ENCODE measurements at regions of chr7 and their contacts with region 1.

Region 1: GRCh38 chr7:142632291-142633134 is 116.8 kb upstream of the PRSS1 start:
- DNase-seq: peak; percentile 22 to 83 (median 44)
- ATAC-seq: peak; percentile 42
- H3K4me3 ChIP-seq: no peak overlapping the region
- H3K4me3 Mint-ChIP-seq: no peak overlapping the region
- H3K27ac ChIP-seq: no peak overlapping the region
- H3K27ac Mint-ChIP-seq: peak overlapping the region; percentile 54
- H3K4me1 ChIP-seq: peaks cover 8% of the 10 kb centered on the region
- H3K4me1 Mint-ChIP-seq: peaks cover 15% of the 10 kb centered on the region
- H3K27me3 ChIP-seq: no peaks in the 10 kb centered on the region
- H3K27me3 Mint-ChIP-seq: no peaks in the 10 kb centered on the region
- CTCF ChIP-seq: peak; percentile 58

Region 2: GRCh38 chr7:142646386-142647140 is 14.1 kb after region 1 on chr7:
- CTCF ChIA-PET with region 1: no interaction called
- POLR2A ChIA-PET with region 1: interaction called, 13 read pairs
- intact Hi-C with region 1: no loop called
- DNase-seq: no peak
- ATAC-seq: peak; percentile 66
- H3K4me3 ChIP-seq: peak overlapping the region; percentile 35
- H3K4me3 Mint-ChIP-seq: peak overlapping the region; percentile 82
- H3K27ac ChIP-seq: no peak overlapping the region
- H3K27ac Mint-ChIP-seq: peak overlapping the region; percentile 86
- H3K4me1 ChIP-seq: no peaks in the 10 kb centered on the region
- H3K4me1 Mint-ChIP-seq: peaks cover 24% of the 10 kb centered on the region
- H3K27me3 ChIP-seq: no peaks in the 10 kb centered on the region
- H3K27me3 Mint-ChIP-seq: peaks cover 28% of the 10 kb centered on the region
- CTCF ChIP-seq: no peak

Region 3: DNA sequence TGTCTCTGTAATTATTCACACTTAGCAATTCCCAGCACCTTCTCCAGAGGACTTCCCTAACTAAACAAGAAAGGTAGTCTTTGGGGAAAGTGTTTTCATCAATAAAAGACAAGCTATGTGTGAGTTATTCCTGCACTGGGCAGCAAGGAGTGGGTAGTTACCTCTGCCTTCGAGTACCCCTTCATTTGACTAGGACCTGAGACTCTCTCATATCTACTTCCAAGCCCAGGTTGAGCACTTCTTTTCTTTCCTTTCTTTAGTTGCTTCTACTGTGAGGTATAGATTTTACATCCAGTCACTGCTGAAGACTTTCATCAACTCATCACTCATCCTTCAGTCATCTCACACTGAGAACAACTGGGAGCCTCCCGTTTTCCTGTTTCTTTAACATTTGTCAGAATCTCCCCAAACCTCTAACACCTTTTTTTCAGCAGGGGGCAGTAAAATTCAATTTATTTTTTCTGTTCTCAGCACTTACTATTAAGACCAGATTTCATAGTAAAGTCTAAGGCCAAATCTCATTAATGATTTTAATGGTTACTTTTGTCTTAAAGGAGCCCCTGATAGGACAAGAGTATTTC is 36.7 kb after region 1 on chr7:
- CTCF ChIA-PET with region 1: no interaction called
- POLR2A ChIA-PET with region 1: interaction called, 3 read pairs
- intact Hi-C with region 1: loop called (anchors 2 to 5 kb)
- DNase-seq: peak in 3 of 14 experiments; percentile 40 to 52 (median 51)
- ATAC-seq: no peak
- H3K4me3 ChIP-seq: no peak overlapping the region
- H3K4me3 Mint-ChIP-seq: no peak overlapping the region
- H3K27ac ChIP-seq: no peak overlapping the region
- H3K27ac Mint-ChIP-seq: peak overlapping the region; percentile 84
- H3K4me1 ChIP-seq: peaks cover 9% of the 10 kb centered on the region
- H3K4me1 Mint-ChIP-seq: peaks cover 35% of the 10 kb centered on the region
- H3K27me3 ChIP-seq: no peaks in the 10 kb centered on the region
- H3K27me3 Mint-ChIP-seq: no peaks in the 10 kb centered on the region
- CTCF ChIP-seq: peak; percentile 43

Region 4: DNA sequence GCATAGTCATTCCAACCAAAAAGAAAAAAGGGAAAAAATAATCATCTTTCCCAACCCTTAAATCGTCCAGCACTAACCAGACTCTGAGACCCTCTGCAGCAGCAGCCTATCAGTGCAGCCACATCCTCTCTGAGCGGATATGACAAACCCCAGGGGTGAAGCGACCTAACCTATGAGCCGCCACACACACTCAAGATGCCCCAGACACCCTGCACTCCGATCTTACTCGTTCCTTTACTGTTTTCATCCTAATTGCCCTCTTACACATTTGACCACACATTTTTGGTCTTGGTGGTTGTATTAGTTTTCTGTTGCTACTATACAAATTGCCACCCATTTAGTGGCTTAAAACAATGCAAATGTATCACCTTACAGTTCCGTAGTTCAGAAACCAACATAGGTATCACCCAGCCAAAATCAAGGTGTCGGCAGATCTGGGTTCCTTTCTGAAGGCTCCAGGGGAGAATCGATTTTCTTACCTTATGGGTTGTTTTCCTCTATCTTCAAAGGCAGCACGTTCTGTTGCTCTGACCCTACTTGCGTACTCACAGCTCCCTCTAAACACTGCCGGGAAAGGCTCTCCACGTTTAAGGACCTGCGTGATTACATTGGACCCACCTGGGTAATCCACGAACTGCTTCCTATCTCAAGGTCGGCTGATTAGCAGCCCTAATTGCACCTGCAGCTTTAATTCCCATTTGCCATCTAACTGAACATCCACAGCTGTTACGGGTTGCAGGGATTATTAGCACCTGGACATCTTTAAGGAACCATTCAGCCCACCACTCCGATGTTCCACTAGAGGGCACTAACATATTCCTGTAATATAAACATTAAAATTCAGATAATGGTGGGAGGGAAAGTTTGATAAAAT is 79.5 kb after region 1 on chr7:
- CTCF ChIA-PET with region 1: no interaction called
- POLR2A ChIA-PET with region 1: interaction called, 18 read pairs
- intact Hi-C with region 1: loop called in 1 of 2 experiments (anchors 5 kb)
- DNase-seq: peak in 8 of 14 experiments; percentile 9 to 66 (median 36)
- ATAC-seq: peak; percentile 56
- H3K4me3 ChIP-seq: peak overlapping the region; percentile 51
- H3K4me3 Mint-ChIP-seq: peak overlapping the region; percentile 84
- H3K27ac ChIP-seq: peak overlapping the region; percentile 40 to 53
- H3K27ac Mint-ChIP-seq: peak overlapping the region; percentile 80
- H3K4me1 ChIP-seq: peaks cover 44% of the 10 kb centered on the region
- H3K4me1 Mint-ChIP-seq: peaks cover 71% of the 10 kb centered on the region
- H3K27me3 ChIP-seq: no peaks in the 10 kb centered on the region
- H3K27me3 Mint-ChIP-seq: no peaks in the 10 kb centered on the region
- CTCF ChIP-seq: peak; percentile 52

Region 5: DNA sequence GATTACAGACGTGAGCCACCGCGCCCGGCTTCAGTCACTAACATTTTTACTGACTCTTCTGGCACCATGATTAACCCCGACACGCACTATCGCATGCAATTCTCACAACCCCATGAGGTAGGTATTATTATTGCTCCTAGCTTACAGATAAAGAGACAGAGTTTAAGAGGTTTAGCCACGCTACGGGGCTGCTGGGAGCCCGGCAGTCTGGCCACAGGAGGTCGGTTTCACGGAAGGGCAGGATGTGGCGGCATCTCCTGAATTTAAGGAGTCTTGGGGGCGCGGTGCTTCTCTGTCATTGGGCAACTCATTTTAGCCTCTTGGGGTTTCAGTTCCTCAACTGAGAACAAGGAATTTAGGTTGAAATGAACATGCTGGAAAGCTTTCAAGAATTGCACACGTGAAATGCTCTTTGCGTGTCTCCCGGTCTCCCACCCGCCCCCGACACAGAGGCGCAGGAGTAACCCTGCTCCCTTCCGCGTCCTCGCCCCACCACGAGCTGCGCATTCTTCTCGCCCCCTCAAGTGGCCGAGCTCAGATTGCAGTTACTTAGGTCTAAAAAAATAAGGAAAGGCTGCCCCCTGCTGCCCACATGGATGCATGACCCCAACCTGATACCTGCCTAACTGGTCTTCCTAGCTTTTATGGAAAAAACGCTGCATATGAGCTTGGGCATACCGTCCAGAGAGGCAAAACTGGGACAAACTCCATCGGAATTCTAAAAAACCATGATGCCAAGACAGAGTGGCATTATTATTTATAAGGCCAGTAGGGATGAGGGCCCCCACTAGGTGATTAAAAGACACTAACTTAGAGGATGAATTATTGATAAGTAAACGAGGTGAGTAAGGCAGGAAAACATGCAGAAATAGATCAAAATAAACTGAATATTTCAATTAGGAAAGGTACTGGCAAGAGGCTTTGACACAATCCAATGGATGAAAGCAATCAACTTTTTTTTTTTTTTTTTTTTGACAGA is 150.7 kb after region 1 on chr7:
- CTCF ChIA-PET with region 1: interaction called, 17 read pairs
- POLR2A ChIA-PET with region 1: interaction called, 53 read pairs
- intact Hi-C with region 1: loop called (anchors 1 to 2 kb)
- DNase-seq: peak; percentile 62 to 90 (median 74)
- ATAC-seq: peak; percentile 43
- H3K4me3 ChIP-seq: peak overlapping the region; percentile 54
- H3K4me3 Mint-ChIP-seq: peak overlapping the region; percentile 91
- H3K27ac ChIP-seq: no peak overlapping the region
- H3K27ac Mint-ChIP-seq: peak overlapping the region; percentile 98
- H3K4me1 ChIP-seq: peaks cover 13% of the 10 kb centered on the region
- H3K4me1 Mint-ChIP-seq: peaks cover 22% of the 10 kb centered on the region
- H3K27me3 ChIP-seq: no peaks in the 10 kb centered on the region
- H3K27me3 Mint-ChIP-seq: no peaks in the 10 kb centered on the region
- CTCF ChIP-seq: peak; percentile 74

Region 6: GRCh38 chr7:142788303-142789289 is 156.1 kb after region 1 on chr7:
- CTCF ChIA-PET with region 1: interaction called, 17 read pairs
- POLR2A ChIA-PET with region 1: interaction called, 53 read pairs
- intact Hi-C with region 1: loop called (anchors 1 to 2 kb)
- DNase-seq: peak in 5 of 14 experiments; percentile 13 to 45 (median 25)
- ATAC-seq: no peak
- H3K4me3 ChIP-seq: peak overlapping the region; percentile 91
- H3K4me3 Mint-ChIP-seq: peak overlapping the region; percentile 97
- H3K27ac ChIP-seq: peak overlapping the region; percentile 82 to 99
- H3K27ac Mint-ChIP-seq: peak overlapping the region; percentile 98
- H3K4me1 ChIP-seq: peaks cover 37% of the 10 kb centered on the region
- H3K4me1 Mint-ChIP-seq: peaks cover 38% of the 10 kb centered on the region
- H3K27me3 ChIP-seq: no peaks in the 10 kb centered on the region
- H3K27me3 Mint-ChIP-seq: no peaks in the 10 kb centered on the region
- CTCF ChIP-seq: no peak

Measured in CD4-positive, alpha-beta T cell (primary cell).